ENCODE measurements at regions of chr17 and their contacts with region 1.

Region 1: GRCh38 chr17:6651357-6651918 is at the starts of genes C17orf100 and MED31:
- DNase-seq: peak; percentile 97
- H3K4me3 ChIP-seq: peak within 1 kb of the TSS; percentile 72 to 84 (median 78)
- H3K27ac ChIP-seq: peak within 1 kb of the TSS; percentile 81 to 88 (median 86)
- H3K4me1 ChIP-seq: peaks cover 0 to 52% (median 30%) of the 10 kb centered on the region in 4 donors
- H3K27me3 ChIP-seq: peaks cover 8 to 36% (median 9%) of the 10 kb centered on the region in 3 donors
- CTCF ChIP-seq: no peak
- EP300 ChIP-seq: no peak
- POLR2A ChIP-seq: peak; percentile 56 to 79
- total RNA-seq, gene C17orf100: 0.81 to 2.8 (median 1.7) TPM
- total RNA-seq, gene MED31: 2.0 to 8.6 (median 7.1) TPM

Region 2: GRCh38 chr17:6555331-6556120 is 95.9 kb before region 1 on chr17:
- intact Hi-C with region 1: loop called (anchors 5 kb)
- DNase-seq: no peak
- H3K4me3 ChIP-seq: peak overlapping the region; percentile 62 to 92 (median 70)
- H3K27ac ChIP-seq: peak overlapping the region; percentile 81 to 86 (median 83)
- H3K4me1 ChIP-seq: peaks cover 0 to 49% (median 31%) of the 10 kb centered on the region in 4 donors
- H3K27me3 ChIP-seq: peaks cover 0 to 14% (median 0%) of the 10 kb centered on the region in 3 donors
- CTCF ChIP-seq: no peak
- EP300 ChIP-seq: no peak
- POLR2A ChIP-seq: no peak

Region 3: GRCh38 chr17:7014261-7014994 is 363.0 kb after region 1 on chr17:
- intact Hi-C with region 1: loop called (anchors 5 kb)
- DNase-seq: peak; percentile 99
- H3K4me3 ChIP-seq: peak overlapping the region; percentile 75 to 86 (median 86)
- H3K27ac ChIP-seq: peak overlapping the region; percentile 96 to 98 (median 96)
- H3K4me1 ChIP-seq: peaks cover 0 to 72% (median 67%) of the 10 kb centered on the region in 4 donors
- H3K27me3 ChIP-seq: no peaks in the 10 kb centered on the region
- CTCF ChIP-seq: peak in 2 of 4 experiments; percentile 35 to 87
- EP300 ChIP-seq: peak in 1 of 4 donors; percentile 30
- POLR2A ChIP-seq: peak; percentile 71 to 92

Measured in sigmoid colon (tissue), 7 donors.